ENCODE measurements at regions of chr14 and their contacts with region 1.

Region 1: GRCh38 chr14:20613094-20614037 is 22.2 kb upstream of the RNASE12 start:
- DNase-seq: peak; percentile 87 to 98 (median 95)
- H3K4me3 ChIP-seq: peak overlapping the region; percentile 87 to 96 (median 95)
- H3K27ac ChIP-seq: peak overlapping the region; percentile 75 to 81
- H3K4me1 ChIP-seq: peaks cover 0 to 6% (median 0%) of the 10 kb centered on the region in 3 donors
- H3K27me3 ChIP-seq: no peaks in the 10 kb centered on the region
- CTCF ChIP-seq: peak; percentile 78

Region 2: DNA sequence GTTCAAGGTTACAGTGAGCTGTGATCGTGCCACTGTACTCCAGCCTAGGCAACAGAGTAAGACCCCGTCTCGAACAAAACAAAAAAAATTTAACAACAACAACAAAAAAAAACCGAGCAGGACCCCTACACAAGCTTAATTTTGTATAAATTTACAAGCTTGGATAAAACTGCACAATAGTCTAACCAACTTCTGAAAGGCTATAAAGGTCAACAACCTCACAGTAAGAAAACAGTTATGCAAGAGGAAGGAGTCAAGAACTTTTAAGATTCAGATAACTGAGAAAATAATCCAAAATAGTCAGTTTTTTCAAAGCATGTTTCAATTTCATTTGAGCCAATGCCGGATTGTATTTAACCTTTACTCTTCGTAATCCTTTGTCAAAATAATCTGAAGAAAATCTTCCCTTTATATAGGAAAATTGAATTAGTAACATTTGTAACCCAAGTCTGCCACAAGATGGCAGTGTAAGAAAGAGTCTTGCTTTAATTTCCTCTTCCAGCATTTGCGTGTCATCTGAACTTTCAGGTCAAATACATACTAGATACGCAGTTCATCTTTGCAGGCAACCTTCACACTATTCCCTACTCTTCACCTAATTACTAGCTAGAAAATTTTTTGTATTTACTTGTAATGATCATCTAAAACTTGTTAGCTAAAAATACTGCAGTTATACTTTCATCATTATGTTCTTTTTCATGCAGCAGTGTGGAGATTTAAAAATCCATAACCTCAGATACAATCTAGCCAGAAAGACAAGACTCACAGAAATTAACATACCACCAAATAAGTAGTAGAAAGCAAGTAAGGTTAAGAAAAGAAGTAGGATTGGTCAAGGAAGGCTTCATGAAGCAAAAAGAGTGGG is 286.1 kb before region 1 on chr14:
- intact Hi-C with region 1: loop called (anchors 10 kb)
- DNase-seq: peak in 2 of 5 donors; percentile 80 to 88
- H3K4me3 ChIP-seq: peak overlapping the region in 2 of 3 donors; percentile 2 to 45
- H3K27ac ChIP-seq: peak overlapping the region; percentile 29 to 68
- H3K4me1 ChIP-seq: peaks cover 0 to 13% (median 6%) of the 10 kb centered on the region in 3 donors
- H3K27me3 ChIP-seq: no peaks in the 10 kb centered on the region
- CTCF ChIP-seq: peak; percentile 61

Region 3: GRCh38 chr14:20413045-20413799 is 200.1 kb before region 1 on chr14 and contains the start of gene TEP1:
- intact Hi-C with region 1: loop called (anchors 10 kb)
- DNase-seq: peak; percentile 86 to 96 (median 92)
- H3K4me3 ChIP-seq: peak within 1 kb of the TSS; percentile 70 to 98 (median 98)
- H3K27ac ChIP-seq: peak within 1 kb of the TSS; percentile 95 to 99
- H3K4me1 ChIP-seq: peaks cover 0 to 9% (median 3%) of the 10 kb centered on the region in 3 donors
- H3K27me3 ChIP-seq: no peaks in the 10 kb centered on the region
- CTCF ChIP-seq: no peak
- total RNA-seq, gene TEP1: 45.2 TPM

Region 4: GRCh38 chr14:20682435-20683124 is 69.2 kb after region 1 on chr14:
- intact Hi-C with region 1: loop called (anchors 5 kb)
- DNase-seq: peak; percentile 89 to 98 (median 96)
- H3K4me3 ChIP-seq: peak overlapping the region; percentile 79 to 94 (median 91)
- H3K27ac ChIP-seq: peak overlapping the region; percentile 98 to 100
- H3K4me1 ChIP-seq: peaks cover 0 to 18% (median 13%) of the 10 kb centered on the region in 3 donors
- H3K27me3 ChIP-seq: no peaks in the 10 kb centered on the region
- CTCF ChIP-seq: no peak